Activated CD4-positive, alpha-beta memory T cell treated with anti-CD3 and anti-CD28 coated beads for 36 hours (primary cell): ENCODE measurements at regions of chr2 and their contacts with region 1.

Region 1: DNA sequence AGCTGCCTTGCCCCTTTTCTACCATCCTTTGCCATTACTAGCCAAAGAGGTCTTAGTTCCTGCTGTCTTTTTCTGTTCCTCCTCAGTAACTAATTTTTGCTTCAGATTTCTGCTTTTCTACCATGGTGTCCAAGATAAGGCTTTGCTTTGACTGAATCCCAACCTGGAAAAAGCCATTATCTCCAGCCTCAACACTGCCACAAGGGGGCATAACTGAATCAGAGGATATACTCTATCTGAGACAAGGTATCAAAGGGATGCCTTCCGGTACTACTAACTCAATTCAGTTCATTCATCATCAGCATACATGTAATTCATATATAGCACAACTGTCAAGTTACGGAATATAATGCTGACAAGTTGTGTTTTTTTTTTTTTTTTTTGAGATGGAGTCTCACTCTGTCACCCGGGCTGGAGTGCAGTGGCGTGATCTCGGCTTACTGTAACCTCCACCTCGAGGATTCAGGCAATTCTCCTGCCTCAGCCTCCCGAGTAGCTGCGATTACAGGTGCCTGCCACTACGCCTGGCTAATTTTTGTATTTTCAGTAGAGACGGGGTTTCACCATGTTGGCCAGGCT is 11.4 kb downstream of the OSGEPL1 start:
- DNase-seq: peak; percentile 45
- H3K4me3 Mint-ChIP-seq: no peak overlapping the region
- H3K27ac Mint-ChIP-seq: no peak overlapping the region
- H3K4me1 Mint-ChIP-seq: no peaks in the 10 kb centered on the region
- H3K27me3 Mint-ChIP-seq: no peaks in the 10 kb centered on the region

Region 2: GRCh38 chr2:189791338-189792042 is 40.3 kb after region 1 on chr2:
- CTCF ChIA-PET with region 1: no interaction called
- POLR2A ChIA-PET with region 1: no interaction called
- intact Hi-C with region 1: loop called (anchors 5 kb)
- DNase-seq: no peak
- H3K4me3 Mint-ChIP-seq: peak overlapping the region; percentile 67
- H3K27ac Mint-ChIP-seq: peak overlapping the region; percentile 46
- H3K4me1 Mint-ChIP-seq: peaks cover 18% of the 10 kb centered on the region
- H3K27me3 Mint-ChIP-seq: no peaks in the 10 kb centered on the region